ENCODE measurements at regions of chr9 and their contacts with region 1.

Region 1: GRCh38 chr9:73451003-73451402 is 299.3 kb downstream of the ANXA1 start:
- DNase-seq: no peak
- H3K4me3 ChIP-seq: no peak overlapping the region
- H3K27ac ChIP-seq: no peak overlapping the region
- H3K4me1 ChIP-seq: no peaks in the 10 kb centered on the region
- H3K27me3 ChIP-seq: no peaks in the 10 kb centered on the region
- CTCF ChIP-seq: no peak
- EP300 ChIP-seq: no peak
- POLR2A ChIP-seq: no peak

Region 2: GRCh38 chr9:73370053-73370452 is 81.0 kb before region 1 on chr9:
- in situ Hi-C with region 1: loop called in 1 of 4 experiments (anchors 25 kb)
- intact Hi-C with region 1: no loop called
- DNase-seq: no peak
- H3K4me3 ChIP-seq: no peak overlapping the region
- H3K27ac ChIP-seq: no peak overlapping the region
- H3K4me1 ChIP-seq: no peaks in the 10 kb centered on the region
- H3K27me3 ChIP-seq: no peaks in the 10 kb centered on the region
- CTCF ChIP-seq: no peak
- EP300 ChIP-seq: no peak
- POLR2A ChIP-seq: no peak

Region 3: DNA sequence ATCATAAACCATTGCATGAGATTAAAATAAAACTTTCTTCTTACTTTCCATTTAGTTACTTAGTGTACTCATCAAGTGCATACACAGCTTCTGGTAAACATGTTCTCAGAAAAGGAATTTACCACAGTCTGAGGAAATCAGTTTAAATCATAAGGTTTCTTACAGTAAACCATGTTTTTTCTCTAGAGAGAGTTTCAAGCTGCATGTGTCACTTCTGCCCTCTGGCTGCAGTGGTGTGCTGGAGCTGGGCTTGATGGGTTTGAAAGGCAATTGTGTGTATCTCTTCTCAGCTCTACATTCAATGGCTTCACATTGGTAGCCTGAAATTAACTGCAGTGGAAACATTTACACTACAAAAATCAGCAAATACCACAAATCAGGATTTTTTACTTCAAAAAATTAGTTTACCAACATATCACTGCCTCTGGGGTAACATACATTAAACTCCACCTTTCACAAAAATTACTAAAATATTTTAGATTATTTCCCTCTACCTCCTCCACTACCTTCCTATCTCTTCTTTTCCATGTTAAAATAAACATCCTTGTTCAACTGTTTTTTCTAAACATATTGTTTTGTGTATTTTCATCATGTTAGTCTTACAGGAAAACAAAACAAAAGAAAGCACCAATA is 114.9 kb after region 1 on chr9:
- in situ Hi-C with region 1: loop called in 1 of 4 experiments (anchors 25 kb)
- intact Hi-C with region 1: no loop called
- DNase-seq: no peak
- H3K4me3 ChIP-seq: no peak overlapping the region
- H3K27ac ChIP-seq: no peak overlapping the region
- H3K4me1 ChIP-seq: no peaks in the 10 kb centered on the region
- H3K27me3 ChIP-seq: no peaks in the 10 kb centered on the region
- CTCF ChIP-seq: no peak
- EP300 ChIP-seq: no peak
- POLR2A ChIP-seq: no peak